Tibial artery (tissue), 4 donors: ENCODE measurements at regions of chr15 and their contacts with region 1.

Region 1: DNA sequence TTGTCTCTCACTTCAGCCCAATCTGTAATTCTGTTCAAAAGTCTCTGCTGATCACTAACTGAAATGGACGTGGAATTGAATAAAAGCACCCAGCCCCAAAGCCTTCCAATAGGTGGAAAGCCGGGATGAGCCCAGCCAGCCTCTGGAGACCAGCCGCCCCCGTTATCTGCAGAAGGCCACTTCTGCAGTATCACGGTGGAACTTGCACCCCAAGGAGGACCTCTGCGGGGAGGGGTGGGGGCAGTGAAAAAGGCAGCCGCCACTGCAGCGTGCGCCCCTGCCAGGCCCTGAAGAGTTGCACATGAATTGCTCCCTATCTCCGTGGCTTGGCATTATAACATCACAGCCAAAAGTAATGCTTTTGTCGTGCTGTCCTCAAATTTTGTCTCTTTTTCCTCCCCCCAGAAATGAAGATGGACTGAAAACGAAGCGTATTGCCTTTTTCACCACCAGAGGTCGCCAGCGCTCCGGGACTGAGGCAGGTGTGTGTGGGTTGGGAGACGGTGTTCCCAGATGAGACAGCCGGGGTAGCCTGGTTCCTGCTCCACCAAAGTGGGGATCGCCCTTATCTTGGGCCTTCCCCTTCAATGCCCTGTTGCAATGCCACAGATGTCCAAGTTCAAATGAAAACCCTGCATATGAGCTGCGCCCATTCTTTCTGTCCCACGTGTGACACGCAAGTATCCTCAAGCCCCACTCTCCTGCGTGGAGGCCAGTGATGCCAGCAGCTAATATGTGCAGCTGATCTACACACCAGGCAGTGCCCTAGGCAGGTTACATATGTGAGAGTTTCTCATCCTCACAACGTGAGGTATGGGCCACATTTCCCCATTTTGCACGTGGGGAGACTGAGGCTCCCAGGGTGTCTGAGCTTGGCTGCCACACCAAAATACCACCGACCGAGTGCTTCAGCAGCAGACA is 96.0 kb downstream of the LRRK1 start:
- DNase-seq: peak; percentile 64 to 80
- H3K4me3 ChIP-seq: no peak overlapping the region
- H3K27ac ChIP-seq: no peak overlapping the region
- H3K4me1 ChIP-seq: no peaks in the 10 kb centered on the region
- H3K27me3 ChIP-seq: no peaks in the 10 kb centered on the region
- CTCF ChIP-seq: peak; percentile 73 to 84

Region 2: GRCh38 chr15:101070502-101071273 is 55.5 kb after region 1 on chr15:
- intact Hi-C with region 1: no loop called
- DNase-seq: no peak
- H3K4me3 ChIP-seq: no peak overlapping the region
- H3K27ac ChIP-seq: peak overlapping the region in 1 of 2 donors; percentile 25
- H3K4me1 ChIP-seq: no peaks in the 10 kb centered on the region
- H3K27me3 ChIP-seq: no peaks in the 10 kb centered on the region
- CTCF ChIP-seq: no peak

Region 3: GRCh38 chr15:101088788-101089583 is 73.8 kb after region 1 on chr15:
- intact Hi-C with region 1: loop called (anchors 5 kb)
- DNase-seq: peak; percentile 65 to 84
- H3K4me3 ChIP-seq: peak overlapping the region in 1 of 2 donors; percentile 33
- H3K27ac ChIP-seq: no peak overlapping the region
- H3K4me1 ChIP-seq: peaks cover 0 to 30% (median 11%) of the 10 kb centered on the region in 4 donors
- H3K27me3 ChIP-seq: no peaks in the 10 kb centered on the region
- CTCF ChIP-seq: peak; percentile 99 to 100

Region 4: GRCh38 chr15:101258238-101259144 is 243.3 kb after region 1 on chr15:
- intact Hi-C with region 1: loop called (anchors 2 kb)
- DNase-seq: no peak
- H3K4me3 ChIP-seq: no peak overlapping the region
- H3K27ac ChIP-seq: no peak overlapping the region
- H3K4me1 ChIP-seq: no peaks in the 10 kb centered on the region
- H3K27me3 ChIP-seq: no peaks in the 10 kb centered on the region
- CTCF ChIP-seq: peak; percentile 87 to 89